ENCODE measurements at regions of chr22 and their contacts with region 1.

Region 1: GRCh38 chr22:39097098-39098020 is at the start of gene APOBEC3H:
- DNase-seq: no peak
- H3K4me3 ChIP-seq: no peak within 1 kb of the TSS
- H3K27ac ChIP-seq: peak within 1 kb of the TSS in 3 of 59 donors; percentile 23 to 43 (median 38)
- H3K27me3 ChIP-seq: no peaks in the 10 kb centered on the region
- CTCF ChIP-seq: no peak
- total RNA-seq, gene APOBEC3H: 0.40 to 1.4 (median 0.89) TPM in 8 of 120 experiments, not detected in the others

Region 2: DNA sequence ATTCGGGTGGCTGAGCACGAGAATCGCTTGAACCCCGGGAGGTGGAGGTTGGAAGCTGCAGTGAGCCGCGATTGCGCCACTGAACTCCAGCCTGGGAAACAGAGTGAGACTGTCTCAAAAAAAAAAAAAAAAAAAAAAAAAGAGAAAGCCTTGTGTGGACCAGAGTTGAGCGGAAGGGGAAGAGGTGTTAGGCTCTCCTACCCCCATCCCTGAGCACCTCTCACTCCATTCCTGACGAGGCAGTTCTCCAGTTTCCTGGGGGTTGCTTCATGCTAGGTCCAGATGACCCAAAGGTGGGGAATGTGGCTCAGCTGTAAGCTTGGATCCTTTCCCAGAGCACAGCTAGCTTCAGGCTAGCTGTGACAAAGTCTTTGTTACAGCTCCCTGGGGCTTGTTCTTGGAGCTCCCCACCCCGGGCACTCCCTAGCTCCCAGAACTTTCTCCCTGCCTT is 294.7 kb before region 1 on chr22:
- intact Hi-C with region 1: no loop called
- DNase-seq: no peak
- H3K4me3 ChIP-seq: no peak overlapping the region
- H3K27ac ChIP-seq: no peak overlapping the region
- H3K27me3 ChIP-seq: no peaks in the 10 kb centered on the region
- CTCF ChIP-seq: no peak

Region 3: DNA sequence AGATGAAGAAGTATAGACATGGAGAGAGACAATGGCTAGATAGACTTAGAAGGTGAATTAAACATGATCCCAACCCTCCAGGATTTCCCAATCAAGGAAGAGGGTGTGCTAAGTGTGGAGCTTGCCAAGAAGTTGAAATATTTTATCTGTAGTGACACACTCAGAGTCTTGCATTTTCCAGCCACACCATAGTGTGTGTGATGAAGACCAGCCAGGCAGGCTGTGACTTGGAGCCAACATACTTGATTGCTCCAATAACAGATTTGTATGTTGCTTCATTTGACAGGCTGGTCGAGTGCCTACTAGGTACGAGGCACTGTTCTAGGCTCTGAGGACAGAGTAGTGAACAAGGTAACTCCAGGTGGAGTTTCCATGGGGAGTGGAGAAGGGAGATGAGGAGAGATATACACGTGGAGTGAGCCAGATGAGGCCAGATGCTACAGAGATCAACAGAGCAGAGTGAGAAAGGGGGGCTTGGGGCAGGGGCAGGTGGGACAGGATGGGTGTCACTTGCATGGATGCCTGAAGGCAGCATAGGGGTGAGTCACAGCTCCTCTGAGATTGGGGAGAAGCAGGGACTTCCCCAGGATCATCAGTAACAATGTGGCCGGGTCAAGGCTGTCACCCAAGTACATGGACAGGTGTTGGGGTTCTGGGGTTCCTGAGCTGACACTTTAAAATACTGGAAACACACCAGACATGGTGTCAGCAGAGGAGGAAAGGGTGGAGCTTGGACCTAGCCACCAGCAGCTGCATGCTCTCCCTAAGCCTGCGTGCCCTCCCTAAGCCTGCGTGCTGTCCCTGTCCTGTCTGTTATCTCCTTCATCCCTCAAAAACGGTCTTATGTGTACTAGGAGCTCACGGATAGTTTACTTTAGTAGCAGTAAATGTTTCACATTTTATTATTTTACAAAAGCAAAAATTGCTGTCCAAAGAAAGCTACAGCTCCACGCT is 123.8 kb after region 1 on chr22:
- intact Hi-C with region 1: no loop called
- DNase-seq: peak in 1 of 10 donors; percentile 30
- H3K4me3 ChIP-seq: no peak overlapping the region
- H3K27ac ChIP-seq: no peak overlapping the region
- H3K27me3 ChIP-seq: no peaks in the 10 kb centered on the region
- CTCF ChIP-seq: no peak

Region 4: DNA sequence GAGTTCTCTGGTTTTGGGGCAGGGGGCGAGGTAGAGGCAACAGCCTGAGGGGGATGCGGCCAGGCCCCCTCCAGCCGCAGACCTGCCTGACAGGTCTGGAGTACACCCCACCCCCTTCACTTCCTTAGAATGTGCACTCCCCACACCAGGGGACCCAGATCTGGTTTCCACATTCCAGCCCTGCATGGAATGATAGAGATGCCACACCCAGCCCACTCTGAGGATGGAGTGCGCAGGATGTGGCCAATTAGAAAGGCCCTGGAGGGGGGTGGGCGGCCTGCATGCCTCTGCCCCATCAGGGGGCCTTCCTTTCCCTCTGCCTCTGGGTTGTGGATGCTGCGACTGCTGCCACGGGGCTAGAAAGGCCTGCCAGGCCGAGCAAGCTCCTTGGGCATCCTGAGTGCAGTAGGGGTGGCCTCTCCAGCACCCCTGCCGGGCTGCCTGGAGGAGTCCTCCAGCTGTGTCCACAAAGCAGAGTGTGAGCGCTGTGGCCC is 331.3 kb after region 1 on chr22:
- intact Hi-C with region 1: no loop called
- DNase-seq: no peak
- H3K4me3 ChIP-seq: no peak overlapping the region
- H3K27ac ChIP-seq: peak overlapping the region in 30 of 59 donors; percentile 2 to 98 (median 66)
- H3K27me3 ChIP-seq: no peaks in the 10 kb centered on the region
- CTCF ChIP-seq: no peak

Region 5: DNA sequence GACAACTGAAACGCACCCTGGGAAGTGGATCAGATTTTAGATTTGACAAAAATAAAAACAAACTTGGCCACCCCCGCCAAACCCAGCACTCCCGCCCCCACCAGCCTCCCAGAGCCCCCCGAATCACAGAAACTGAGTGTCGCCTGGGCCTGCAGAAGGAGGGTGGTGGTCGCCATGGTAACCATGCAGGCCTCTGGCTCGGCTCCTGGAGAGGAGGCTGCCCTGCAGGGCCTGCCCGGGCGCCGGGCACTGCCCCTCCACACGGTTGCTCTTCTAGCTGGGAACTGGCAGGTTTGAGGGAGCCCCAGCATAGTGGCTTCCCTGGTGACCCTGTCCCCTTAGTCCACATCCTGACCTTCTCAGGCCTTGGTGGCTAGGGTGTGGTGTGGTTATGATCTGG is 492.5 kb after region 1 on chr22:
- intact Hi-C with region 1: loop called in 1 of 2 experiments (anchors 5 kb)
- DNase-seq: peak in 1 of 10 donors; percentile 50
- H3K4me3 ChIP-seq: no peak overlapping the region
- H3K27ac ChIP-seq: peak overlapping the region in 2 of 59 donors; percentile 18 to 29
- H3K27me3 ChIP-seq: peaks cover 0 to 7% (median 0%) of the 10 kb centered on the region in 45 donors
- CTCF ChIP-seq: no peak

Region 6: DNA sequence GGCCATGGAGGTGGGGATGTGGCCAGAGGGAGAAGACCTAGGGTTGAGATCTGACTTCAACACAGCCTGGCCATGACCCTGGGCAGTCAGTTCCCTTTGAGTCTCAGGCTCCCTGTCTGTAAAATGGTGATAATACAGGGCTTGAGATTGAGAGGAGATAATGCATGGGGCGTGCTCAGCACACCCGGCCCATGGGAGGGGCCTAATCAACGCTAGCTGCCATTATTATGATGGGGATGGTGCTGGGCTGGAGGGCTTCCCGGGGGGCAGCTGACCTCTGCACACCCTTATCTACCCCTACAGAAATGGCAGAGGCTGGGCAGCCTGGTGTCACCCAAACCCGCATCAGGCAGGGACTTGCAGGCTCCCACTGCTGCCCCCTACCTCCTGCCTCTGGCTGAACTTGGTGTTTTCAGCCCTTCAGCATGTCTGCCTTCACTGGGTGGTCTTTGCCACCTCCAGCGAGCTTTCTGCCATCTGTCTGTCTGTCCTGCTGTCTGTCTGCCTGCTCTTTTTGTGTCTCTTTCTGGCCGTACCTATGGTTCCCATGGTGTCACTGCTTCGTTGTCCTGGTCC is 557.7 kb after region 1 on chr22:
- intact Hi-C with region 1: no loop called
- DNase-seq: no peak
- H3K4me3 ChIP-seq: no peak overlapping the region
- H3K27ac ChIP-seq: no peak overlapping the region
- H3K27me3 ChIP-seq: peaks cover 0 to 15% (median 0%) of the 10 kb centered on the region in 45 donors
- CTCF ChIP-seq: peak in 9 of 56 donors; percentile 5 to 33 (median 14)

Measured in dorsolateral prefrontal cortex (tissue), 120 donors.